HEK293 (cell line): ENCODE measurements at regions of chr2 and their contacts with region 1.

Region 1: GRCh38 chr2:39513641-39514094 is 76.6 kb upstream of the MAP4K3 start:
- H3K4me3 ChIP-seq: no peak overlapping the region
- H3K27ac ChIP-seq: no peak overlapping the region
- H3K4me1 ChIP-seq: peaks cover 3% of the 10 kb centered on the region; the same call in 1 of the 2 replicates
- CTCF ChIP-seq: peak; percentile 51; the same call in 1 of the 2 replicates

Region 2: DNA sequence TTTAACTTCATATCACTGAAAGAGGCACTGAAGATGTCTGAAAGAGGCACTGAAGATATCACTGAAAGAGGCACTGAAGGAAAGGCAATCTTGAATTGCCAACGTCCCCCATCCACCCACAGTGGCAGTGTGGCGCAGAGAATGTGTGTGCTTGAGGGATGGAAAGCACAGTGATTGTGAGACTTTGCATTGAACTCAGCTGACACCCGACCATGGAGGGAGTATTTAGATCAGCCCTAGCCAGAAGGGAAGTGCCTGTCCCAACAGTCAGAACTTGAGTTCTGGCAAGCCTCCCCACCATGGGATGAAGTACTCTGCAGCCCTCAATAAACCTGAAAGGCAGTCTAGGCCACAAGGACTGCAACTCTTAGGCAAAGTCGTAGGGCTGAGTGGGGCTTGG is 110.4 kb before region 1 on chr2:
- CTCF ChIA-PET with region 1: no interaction called
- POLR2A ChIA-PET with region 1: no interaction called
- H3K4me3 ChIP-seq: no peak overlapping the region
- H3K27ac ChIP-seq: peak overlapping the region; percentile 10; the same call in 1 of the 2 replicates
- H3K4me1 ChIP-seq: peaks cover 19% of the 10 kb centered on the region
- CTCF ChIP-seq: peak; percentile 13; the same call in 1 of the 2 replicates

Region 3: DNA sequence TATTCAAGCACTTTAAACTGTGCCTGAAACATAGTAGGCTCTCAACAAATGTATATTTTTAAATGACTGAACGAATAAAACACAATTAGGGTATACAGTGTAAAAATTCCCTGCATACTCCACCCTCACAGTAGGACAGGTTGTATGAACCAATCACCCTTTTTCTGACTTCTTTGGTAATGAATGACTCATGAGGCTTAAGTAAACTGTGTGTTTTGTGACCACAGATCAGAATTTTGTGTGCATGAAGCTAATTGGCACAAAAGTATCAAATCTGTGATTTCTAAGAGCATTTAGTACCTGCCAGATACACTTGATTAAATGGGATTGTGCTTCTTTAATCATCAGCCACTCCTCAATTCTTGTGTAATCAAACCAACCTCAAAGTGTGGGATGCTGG is 33.3 kb after region 1 on chr2:
- CTCF ChIA-PET with region 1: no interaction called
- POLR2A ChIA-PET with region 1: no interaction called
- H3K4me3 ChIP-seq: no peak overlapping the region
- H3K27ac ChIP-seq: no peak overlapping the region
- H3K4me1 ChIP-seq: peaks cover 14% of the 10 kb centered on the region
- CTCF ChIP-seq: no peak

Region 4: DNA sequence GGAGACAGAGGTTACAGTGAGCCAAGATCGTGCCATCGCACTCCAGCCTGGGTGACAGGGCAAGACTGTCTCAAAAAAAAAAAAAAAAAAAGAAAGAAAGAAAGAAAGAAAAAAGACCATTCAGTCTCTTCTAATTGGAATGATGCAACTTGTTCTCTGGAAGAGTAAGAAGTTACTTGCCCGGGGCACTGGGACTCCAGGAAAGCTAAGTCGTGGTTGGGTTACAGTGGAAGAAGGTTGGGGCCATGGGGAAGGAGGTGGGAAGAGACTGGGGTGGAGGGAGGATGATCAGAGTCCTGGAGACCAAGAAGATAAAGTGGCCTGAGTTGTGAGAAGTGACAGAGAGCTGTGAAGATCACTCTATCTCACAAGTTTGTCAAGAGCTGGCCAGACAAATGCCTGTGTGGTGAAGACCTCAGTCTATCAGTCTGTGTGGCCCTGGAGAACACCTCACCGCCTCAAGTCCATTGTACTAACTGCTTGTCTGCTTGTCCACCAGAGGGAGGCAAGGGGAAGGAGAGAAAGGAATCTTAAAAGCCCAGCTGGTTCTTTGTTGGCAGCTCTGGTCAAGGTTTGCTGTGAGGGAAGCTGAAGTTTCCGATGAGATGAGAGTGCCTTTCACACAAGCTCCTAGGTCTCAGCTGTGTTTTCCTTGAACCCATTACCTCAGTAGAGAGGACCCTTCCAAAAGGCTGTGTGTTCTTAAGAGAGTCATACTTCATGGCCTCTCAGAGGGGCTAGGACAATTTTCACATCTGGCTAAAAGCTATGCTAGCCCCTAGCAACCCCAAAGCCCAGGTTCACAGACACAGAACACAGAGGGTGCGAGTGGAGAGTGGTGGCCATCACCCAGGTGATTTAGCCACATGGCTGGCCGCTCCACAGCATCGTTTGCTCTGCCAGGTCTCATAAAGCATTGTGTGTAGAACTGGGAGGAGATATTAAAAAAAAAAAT is 80.0 kb after region 1 on chr2:
- CTCF ChIA-PET with region 1: interaction called, 13 read pairs
- POLR2A ChIA-PET with region 1: no interaction called
- H3K4me3 ChIP-seq: no peak overlapping the region
- H3K27ac ChIP-seq: no peak overlapping the region
- H3K4me1 ChIP-seq: no peaks in the 10 kb centered on the region
- CTCF ChIP-seq: peak; percentile 62